Esophagus muscularis mucosa (tissue), 4 donors: ENCODE measurements at regions of chr14 and their contacts with region 1.

Region 1: DNA sequence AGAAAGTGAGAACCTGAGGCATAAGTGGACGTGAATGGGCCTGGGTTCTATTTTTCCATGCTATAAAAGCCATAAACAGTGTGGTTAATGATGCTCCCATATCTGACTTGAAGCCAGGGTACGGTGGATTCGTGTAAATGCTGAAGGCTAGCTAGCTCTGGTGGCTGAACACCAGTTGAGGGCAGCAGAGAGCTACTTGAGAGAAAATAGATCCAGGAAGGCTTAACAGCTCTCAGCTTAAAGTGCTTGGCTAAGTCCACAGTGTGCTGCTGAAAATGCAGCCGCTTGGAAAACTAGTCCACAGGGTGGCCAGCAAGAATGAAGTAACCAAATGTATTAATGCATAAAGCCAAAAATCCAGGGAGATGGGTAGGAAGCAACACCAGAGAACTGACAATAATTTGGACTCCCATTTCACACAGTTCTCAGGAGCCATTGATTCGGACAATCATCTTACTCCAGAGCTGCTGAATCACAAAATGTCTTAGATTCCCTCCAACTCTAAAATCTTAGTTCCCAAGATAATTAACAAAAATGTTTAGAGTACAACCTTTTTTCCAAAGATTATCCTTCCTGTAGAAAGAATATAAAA is 15.0 kb upstream of the FOXG1 start:
- DNase-seq: no peak
- H3K4me3 ChIP-seq: no peak overlapping the region
- H3K27ac ChIP-seq: no peak overlapping the region
- H3K4me1 ChIP-seq: peaks cover 0 to 11% (median 5%) of the 10 kb centered on the region in 4 donors
- H3K27me3 ChIP-seq: peaks cover 0 to 45% (median 0%) of the 10 kb centered on the region in 4 donors
- CTCF ChIP-seq: peak; percentile 39 to 59 (median 45)
- EP300 ChIP-seq: no peak
- POLR2A ChIP-seq: no peak

Region 2: GRCh38 chr14:29222671-29223268 is 471.2 kb after region 1 on chr14:
- intact Hi-C with region 1: loop called (anchors 10 kb)
- DNase-seq: no peak
- H3K4me3 ChIP-seq: no peak overlapping the region
- H3K27ac ChIP-seq: no peak overlapping the region
- H3K4me1 ChIP-seq: peaks cover 0 to 4% (median 0%) of the 10 kb centered on the region in 4 donors
- H3K27me3 ChIP-seq: no peaks in the 10 kb centered on the region
- CTCF ChIP-seq: peak; percentile 30 to 47 (median 39)
- EP300 ChIP-seq: no peak
- POLR2A ChIP-seq: no peak

Region 3: GRCh38 chr14:29536886-29537511 is 785.4 kb after region 1 on chr14:
- intact Hi-C with region 1: loop called (anchors 5 kb)
- DNase-seq: no peak
- H3K4me3 ChIP-seq: no peak overlapping the region
- H3K27ac ChIP-seq: no peak overlapping the region
- H3K4me1 ChIP-seq: no peaks in the 10 kb centered on the region
- H3K27me3 ChIP-seq: no peaks in the 10 kb centered on the region
- CTCF ChIP-seq: peak; percentile 26 to 49 (median 48)
- EP300 ChIP-seq: no peak
- POLR2A ChIP-seq: no peak